ENCODE measurements at regions of chr15 and their contacts with region 1.

Region 1: DNA sequence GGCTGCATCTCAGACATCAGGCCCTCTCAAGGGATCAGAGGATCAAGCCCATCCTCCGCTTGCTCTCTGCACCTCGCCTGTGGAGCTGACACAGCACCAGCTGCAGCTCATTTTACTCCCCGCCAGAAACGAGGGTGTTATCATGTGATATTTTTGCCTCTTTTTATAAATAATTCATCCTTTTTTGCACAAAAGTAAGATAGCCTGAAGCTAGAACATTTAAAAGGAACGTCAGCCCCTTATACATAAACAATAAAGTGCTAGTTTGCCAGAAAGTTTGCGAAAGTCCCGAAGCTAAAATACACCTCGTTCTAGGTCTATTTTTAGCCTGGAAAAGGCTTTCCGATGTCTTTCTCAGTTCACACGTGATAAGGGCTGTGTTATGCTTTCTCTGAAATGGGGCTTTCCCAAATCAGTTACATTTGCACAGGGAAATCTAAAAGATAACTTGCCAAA is 9.6 kb upstream of the FAM174B start:
- DNase-seq: no peak
- H3K4me3 Mint-ChIP-seq: no peak overlapping the region
- H3K27ac Mint-ChIP-seq: no peak overlapping the region
- H3K4me1 Mint-ChIP-seq: peaks cover 4% of the 10 kb centered on the region
- H3K27me3 Mint-ChIP-seq: peaks cover 12% of the 10 kb centered on the region

Region 2: GRCh38 chr15:92565351-92566125 is 99.6 kb before region 1 on chr15:
- intact Hi-C with region 1: no loop called
- DNase-seq: no peak
- H3K4me3 Mint-ChIP-seq: no peak overlapping the region
- H3K27ac Mint-ChIP-seq: no peak overlapping the region
- H3K4me1 Mint-ChIP-seq: peaks cover 2% of the 10 kb centered on the region
- H3K27me3 Mint-ChIP-seq: peaks cover 18% of the 10 kb centered on the region

Region 3: DNA sequence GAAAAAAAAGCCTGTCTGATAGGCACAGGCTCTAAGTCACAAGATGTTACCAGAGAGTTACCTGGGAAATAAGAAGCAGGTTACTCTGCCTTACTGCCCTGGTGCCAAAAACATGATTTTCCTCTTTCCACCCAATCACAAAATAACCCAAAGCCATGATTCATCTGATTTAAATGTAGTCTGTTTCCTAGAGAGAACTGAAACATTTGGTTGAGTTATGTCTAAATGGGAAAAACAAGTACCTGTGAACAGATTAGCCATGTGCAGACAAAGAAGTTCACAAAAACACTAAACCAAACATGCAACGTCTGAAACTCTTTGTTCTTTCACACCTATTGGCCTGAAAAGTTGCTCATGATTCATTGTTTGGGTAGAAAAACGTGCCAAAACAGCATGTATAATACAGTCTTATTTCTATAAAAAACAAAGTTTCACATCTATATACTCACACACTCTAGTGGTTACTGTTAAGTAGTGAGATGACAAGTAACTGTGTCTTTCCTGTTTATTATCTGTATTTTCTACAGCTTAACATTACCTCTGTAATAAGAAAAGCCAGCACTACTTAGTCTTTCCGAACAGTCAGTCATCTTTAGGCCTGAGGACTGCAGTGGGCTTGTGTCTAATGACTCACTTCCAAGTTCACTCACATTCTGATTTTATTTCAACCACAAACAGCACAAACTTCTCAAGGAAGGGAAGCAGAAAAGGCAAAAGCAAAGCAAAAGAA is 39.7 kb before region 1 on chr15:
- intact Hi-C with region 1: loop called (anchors 2 kb)
- DNase-seq: no peak
- H3K4me3 Mint-ChIP-seq: peak overlapping the region; percentile 36
- H3K27ac Mint-ChIP-seq: peak overlapping the region; percentile 77
- H3K4me1 Mint-ChIP-seq: peaks cover 13% of the 10 kb centered on the region
- H3K27me3 Mint-ChIP-seq: peaks cover 4% of the 10 kb centered on the region

Region 4: DNA sequence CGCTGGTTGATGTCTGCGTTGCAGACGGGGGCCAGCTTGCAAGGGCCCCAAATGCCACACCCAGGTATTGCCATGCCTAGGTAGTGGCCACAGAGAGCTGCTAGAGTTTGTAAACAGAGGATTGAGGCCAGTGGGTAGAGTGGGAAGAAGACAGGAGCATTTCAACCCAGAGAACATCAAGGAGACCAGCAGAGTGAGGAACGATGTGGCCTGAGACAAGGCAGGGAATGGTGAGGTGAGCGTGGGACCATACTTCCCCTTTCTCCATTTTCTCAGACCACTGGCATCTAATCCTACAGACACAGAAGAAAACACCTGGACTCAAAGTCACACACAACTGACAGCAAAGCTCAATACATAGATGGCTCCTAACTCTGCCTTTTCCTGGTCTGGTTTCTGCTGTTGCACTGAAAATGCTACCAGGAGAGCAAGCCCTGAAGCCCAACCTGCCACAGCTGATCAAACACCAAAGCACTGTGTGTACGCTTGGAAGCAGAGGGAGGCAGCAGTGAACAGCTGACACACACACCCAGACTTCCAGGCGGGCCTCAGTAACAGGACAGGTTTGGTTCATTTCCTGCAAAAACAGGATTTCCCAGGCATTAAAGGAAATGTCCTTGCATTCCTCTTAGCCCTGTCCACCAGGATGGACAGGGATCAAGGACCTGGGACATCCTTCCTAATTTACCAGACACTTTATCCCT is 11.1 kb before region 1 on chr15:
- intact Hi-C with region 1: no loop called
- DNase-seq: no peak
- H3K4me3 Mint-ChIP-seq: no peak overlapping the region
- H3K27ac Mint-ChIP-seq: no peak overlapping the region
- H3K4me1 Mint-ChIP-seq: peaks cover 4% of the 10 kb centered on the region
- H3K27me3 Mint-ChIP-seq: peaks cover 33% of the 10 kb centered on the region

Region 5: DNA sequence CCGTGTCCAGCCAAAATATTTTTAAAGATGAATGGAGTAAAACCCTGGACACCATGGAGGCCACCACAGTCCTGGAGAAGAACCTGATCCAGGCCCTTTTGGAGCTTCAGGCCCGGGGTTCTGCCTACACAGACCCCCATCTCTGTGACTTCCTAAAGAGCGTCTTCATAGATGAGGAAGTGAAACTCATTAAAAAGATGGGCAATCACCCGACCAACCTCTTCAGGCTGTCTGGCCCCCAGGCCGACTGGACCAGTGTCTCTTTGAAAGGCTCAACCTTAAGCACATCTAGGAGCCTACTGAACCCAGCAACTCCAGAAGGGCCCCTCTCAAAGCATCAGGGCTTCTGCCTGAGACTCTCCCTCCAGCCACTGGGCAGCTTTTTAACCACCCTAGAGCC is 98.3 kb after region 1 on chr15:
- intact Hi-C with region 1: no loop called
- DNase-seq: no peak
- H3K4me3 Mint-ChIP-seq: no peak overlapping the region
- H3K27ac Mint-ChIP-seq: no peak overlapping the region
- H3K4me1 Mint-ChIP-seq: no peaks in the 10 kb centered on the region
- H3K27me3 Mint-ChIP-seq: peaks cover 3% of the 10 kb centered on the region

Region 6: DNA sequence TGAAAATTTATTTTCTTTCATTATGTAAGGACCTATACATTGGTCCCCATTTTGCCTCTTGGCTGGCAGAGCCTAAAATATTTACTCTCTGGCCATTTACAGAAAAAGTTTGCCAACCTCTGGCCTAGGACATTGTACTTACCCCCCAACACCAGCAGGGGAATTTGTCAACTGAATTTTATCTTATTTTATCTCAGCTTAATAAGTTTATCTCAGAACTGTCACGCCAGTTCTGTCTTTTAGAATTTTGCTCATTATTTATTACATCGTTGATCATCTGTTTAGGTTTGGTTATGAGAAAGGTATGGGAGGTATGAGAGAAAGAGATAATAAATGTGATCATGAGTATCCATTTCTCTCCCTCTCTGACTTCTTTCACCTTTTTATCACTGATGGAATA is 273.3 kb after region 1 on chr15:
- intact Hi-C with region 1: no loop called
- DNase-seq: no peak
- H3K4me3 Mint-ChIP-seq: no peak overlapping the region
- H3K27ac Mint-ChIP-seq: no peak overlapping the region
- H3K4me1 Mint-ChIP-seq: peaks cover 44% of the 10 kb centered on the region
- H3K27me3 Mint-ChIP-seq: no peaks in the 10 kb centered on the region

Measured in activated CD4-positive, alpha-beta T cell treated with anti-CD3 and anti-CD28 coated beads, Interleukin-2, amount 10 ng/mL, durations not matched to agents 24 days and 14 days (primary cell).